HEK293 (cell line): ENCODE measurements at regions of chr22 and their contacts with region 1.

Region 1: DNA sequence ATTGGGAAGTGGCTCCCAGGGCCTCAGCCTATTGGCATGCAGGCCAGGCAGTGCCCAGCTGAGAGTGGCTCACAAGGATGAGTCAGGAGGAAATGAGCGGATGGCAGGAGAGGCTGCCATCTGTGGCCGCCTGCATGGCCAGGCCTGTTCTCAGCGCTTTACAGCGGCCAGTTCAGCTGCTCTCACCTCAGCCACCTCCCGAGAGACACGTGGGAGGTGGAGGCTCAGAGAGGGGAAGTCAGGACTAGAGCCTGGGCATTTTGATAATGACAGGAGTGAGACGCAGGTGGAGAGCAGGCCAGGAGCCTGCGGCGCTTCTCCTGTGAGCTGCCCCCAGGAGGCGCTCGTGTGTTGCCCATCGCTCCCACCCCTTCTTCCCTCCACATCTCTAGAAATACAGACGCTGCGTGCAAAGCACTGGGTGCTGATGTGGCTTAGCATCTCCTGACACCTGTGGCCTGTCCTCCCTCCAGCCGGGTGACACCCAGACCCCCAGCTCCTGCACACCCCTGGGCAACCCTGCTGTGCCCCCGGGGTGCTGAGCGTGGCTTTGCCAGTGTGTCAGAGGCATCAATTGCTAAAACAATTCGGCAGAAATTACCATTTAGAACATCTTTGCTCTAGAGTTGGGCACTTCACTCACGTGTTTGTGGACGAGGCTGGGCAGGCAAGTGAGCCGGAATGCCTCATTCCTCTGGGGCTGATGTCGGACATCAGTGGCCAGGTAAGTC is 21.4 kb upstream of the PANX2 start:
- H3K4me3 ChIP-seq: no peak overlapping the region
- H3K27ac ChIP-seq: no peak overlapping the region
- H3K4me1 ChIP-seq: no peaks in the 10 kb centered on the region
- CTCF ChIP-seq: peak; percentile 82

Region 2: DNA sequence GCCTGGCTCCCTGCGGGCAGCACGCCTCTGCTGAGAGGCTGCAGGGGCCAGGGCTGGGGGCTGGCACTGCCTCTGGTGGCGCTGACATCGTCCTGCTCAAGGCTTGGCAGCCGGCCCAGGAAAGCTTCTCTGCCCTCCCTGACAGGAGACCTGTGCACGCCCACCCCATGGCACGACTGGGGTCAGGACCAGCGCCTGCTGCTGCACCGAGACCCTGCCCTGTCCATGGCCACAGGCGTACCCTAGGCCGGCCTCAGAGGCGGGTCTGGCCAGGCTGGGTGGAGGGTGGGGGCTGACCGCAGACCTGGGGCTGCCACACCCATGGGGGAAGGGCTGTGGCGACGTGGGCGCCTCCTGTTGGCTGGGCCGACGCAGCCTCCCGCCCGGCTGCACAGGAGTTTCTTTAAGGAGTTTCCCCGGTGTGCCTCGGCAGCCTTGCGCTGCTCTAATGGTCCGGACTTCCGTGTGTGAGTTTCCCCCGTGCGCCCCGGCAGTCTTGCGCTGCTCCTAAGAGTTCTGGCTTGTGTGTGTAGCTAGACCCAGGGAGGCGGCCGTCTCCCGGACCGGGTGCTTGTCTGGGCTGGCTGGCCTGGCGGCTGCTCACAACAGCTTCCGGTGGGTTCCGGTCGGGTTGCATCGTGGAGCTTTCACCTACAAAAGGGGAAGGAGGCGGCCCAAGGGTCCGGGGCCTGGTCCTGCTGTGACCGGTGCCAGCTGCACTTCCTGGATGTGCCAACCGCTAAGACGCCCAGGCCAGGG is 41.2 kb after region 1 on chr22:
- CTCF ChIA-PET with region 1: interaction called, 10 read pairs
- POLR2A ChIA-PET with region 1: interaction called, 4 read pairs
- H3K4me3 ChIP-seq: peak overlapping the region; percentile 37
- H3K27ac ChIP-seq: peak overlapping the region; percentile 45; the same call in 1 of the 2 replicates
- H3K4me1 ChIP-seq: peaks cover 30% of the 10 kb centered on the region
- CTCF ChIP-seq: peak; percentile 71

Region 3: DNA sequence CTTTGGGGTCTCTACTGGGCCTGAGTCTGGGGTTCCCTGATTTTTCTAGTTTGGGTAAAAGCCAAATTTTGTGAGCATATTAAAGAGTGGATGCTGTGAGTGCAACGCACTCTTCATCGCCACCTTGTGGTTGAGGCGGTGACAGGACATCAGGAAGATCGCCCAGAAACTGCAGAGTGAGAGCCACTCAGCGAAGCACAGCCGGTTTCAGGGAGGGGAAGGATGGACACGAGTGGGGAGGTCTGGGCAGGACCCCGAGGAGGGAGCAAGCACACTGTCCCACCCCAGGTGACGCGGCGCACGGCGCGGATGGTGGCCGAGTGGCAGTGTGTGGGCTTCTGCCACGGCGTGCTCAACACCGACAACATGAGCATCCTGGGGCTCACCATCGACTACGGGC is 60.7 kb after region 1 on chr22:
- CTCF ChIA-PET with region 1: interaction called, 24 read pairs
- POLR2A ChIA-PET with region 1: interaction called, 4 read pairs
- H3K4me3 ChIP-seq: no peak overlapping the region
- H3K27ac ChIP-seq: no peak overlapping the region
- H3K4me1 ChIP-seq: no peaks in the 10 kb centered on the region
- CTCF ChIP-seq: peak; percentile 70

Region 4: DNA sequence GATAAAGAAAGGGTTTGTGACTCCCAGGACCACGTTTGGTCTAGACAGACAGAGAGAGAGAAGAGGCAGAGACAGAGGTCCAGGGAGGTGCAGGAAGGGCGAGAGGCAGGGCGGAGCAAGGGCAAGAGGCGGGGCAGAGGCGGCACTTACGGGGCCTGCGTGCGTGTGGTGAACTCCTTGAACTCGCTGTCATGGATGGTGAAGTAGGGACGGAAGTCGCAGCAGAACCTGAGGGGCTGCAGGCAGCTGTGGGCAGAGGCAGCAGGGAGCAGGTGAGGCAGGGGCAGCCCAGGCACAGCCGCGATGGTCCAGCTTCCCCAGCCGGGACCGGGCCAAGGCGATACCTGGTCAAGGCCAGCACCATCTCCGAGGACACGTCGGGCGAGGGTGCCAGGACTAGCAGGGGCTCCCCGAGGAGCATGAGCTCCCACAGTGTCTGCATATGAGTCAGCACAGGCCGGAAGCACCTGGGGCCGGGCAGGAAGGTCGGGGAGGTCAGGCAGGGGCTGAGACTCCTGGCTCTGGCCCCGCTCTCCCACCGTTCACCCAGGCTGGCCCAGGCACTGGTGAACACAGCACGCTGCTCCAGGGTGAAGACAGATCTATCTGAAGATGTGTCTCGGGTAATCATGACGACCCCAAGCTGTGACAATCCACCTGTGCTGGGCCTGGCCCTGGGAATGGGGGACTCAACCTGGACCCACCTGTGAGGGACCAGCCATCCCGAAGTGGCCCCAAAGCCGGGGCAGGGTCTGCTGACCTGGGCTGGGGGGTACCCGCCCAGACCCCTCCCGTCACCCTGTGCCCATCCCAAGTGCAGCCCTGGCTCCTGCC is 165.5 kb after region 1 on chr22:
- CTCF ChIA-PET with region 1: no interaction called
- POLR2A ChIA-PET with region 1: no interaction called
- H3K4me3 ChIP-seq: no peak overlapping the region
- H3K27ac ChIP-seq: no peak overlapping the region
- H3K4me1 ChIP-seq: no peaks in the 10 kb centered on the region
- CTCF ChIP-seq: no peak

Region 5: DNA sequence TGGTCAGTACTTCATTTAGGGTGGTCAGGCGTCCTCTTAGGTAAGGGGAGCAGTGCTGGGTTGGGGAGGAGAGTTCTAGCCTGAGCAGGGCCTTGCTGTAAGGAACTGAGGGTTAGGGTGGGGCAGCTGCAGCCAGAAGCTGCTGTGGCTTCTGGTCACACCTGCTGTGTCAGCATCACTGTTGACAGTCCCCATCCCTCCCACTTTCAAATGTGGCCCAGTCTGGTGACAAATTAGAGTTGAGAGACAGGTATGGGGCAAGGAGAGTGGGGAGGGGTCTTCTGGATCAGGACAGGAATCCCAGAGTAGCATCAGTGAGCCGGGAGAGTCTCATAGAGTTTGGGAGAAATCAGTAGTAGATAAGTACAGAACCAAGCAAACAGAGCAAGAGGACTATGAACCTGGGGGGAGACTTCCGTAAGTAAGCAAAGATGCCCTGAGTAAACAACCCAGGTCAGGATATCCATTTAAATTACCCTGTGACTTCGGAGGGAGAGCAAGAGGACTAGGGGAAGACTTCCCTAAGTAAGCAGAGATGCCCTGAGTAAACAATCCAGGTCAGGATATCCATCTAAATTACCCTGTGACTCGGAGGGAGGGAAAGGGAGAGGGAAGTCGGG is 247.7 kb after region 1 on chr22:
- CTCF ChIA-PET with region 1: no interaction called
- POLR2A ChIA-PET with region 1: no interaction called
- H3K4me3 ChIP-seq: no peak overlapping the region
- H3K27ac ChIP-seq: no peak overlapping the region; the same call in 1 of the 2 replicates
- H3K4me1 ChIP-seq: peaks cover 13% of the 10 kb centered on the region
- CTCF ChIP-seq: no peak